Adrenal gland (tissue), 19 donors: ENCODE measurements at regions of chr4 and their contacts with region 1.

Region 1: GRCh38 chr4:17810260-17811077 is at the starts of genes DCAF16 and NCAPG:
- DNase-seq: peak; percentile 99 to 100 (median 99)
- H3K4me3 ChIP-seq: peak within 1 kb of the TSS; percentile 64 to 88 (median 82)
- H3K27ac ChIP-seq: peak within 1 kb of the TSS; percentile 87 to 98 (median 96)
- H3K4me1 ChIP-seq: peaks cover 30 to 50% of the 10 kb centered on the region in 2 donors
- H3K27me3 ChIP-seq: no peaks in the 10 kb centered on the region
- CTCF ChIP-seq: peak in 1 of 6 experiments; percentile 6
- POLR2A ChIP-seq: peak; percentile 93 to 98
- total RNA-seq, gene DCAF16: 14.4 to 43.1 (median 25.2) TPM
- total RNA-seq, gene NCAPG: 0.17 to 16.1 (median 0.77) TPM

Region 2: GRCh38 chr4:17544205-17544604 is 266.3 kb before region 1 on chr4:
- intact Hi-C with region 1: loop called (anchors 10 kb)
- DNase-seq: peak in 5 of 7 donors; percentile 27 to 40 (median 30)
- H3K4me3 ChIP-seq: no peak overlapping the region
- H3K27ac ChIP-seq: no peak overlapping the region
- H3K4me1 ChIP-seq: peaks cover 0 to 8% of the 10 kb centered on the region in 2 donors
- H3K27me3 ChIP-seq: no peaks in the 10 kb centered on the region
- CTCF ChIP-seq: no peak
- POLR2A ChIP-seq: no peak

Region 3: DNA sequence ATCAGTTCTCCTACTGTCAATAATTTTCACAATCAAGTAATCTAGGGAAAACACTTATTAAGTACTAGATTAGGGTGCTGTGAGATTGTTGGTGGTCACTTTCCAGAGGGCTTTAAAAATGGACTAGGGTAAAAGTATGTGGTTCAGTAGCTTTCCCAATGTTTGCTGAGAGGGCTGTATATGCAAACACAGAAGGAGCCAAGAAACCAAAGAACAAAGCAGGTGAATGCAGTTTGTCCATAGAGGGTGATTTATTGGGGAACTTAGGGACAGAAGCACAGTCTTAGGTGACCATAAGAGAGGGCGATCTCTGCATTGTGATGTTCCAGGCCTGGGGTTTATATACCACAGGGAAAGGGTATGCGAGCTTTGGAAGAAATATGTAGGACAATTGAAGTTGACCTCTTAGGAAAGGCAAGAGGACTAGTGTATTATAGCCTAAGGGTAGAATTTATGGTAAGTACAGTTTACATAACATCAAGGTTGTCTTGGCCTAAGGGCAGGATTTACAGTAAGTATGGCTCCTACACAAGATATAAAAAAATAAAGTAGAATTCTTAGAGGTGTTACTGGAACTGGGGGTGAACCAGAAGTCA is 56.9 kb before region 1 on chr4:
- intact Hi-C with region 1: no loop called
- DNase-seq: no peak
- H3K4me3 ChIP-seq: no peak overlapping the region
- H3K27ac ChIP-seq: no peak overlapping the region
- H3K4me1 ChIP-seq: no peaks in the 10 kb centered on the region
- H3K27me3 ChIP-seq: no peaks in the 10 kb centered on the region
- CTCF ChIP-seq: no peak
- POLR2A ChIP-seq: no peak

Region 4: DNA sequence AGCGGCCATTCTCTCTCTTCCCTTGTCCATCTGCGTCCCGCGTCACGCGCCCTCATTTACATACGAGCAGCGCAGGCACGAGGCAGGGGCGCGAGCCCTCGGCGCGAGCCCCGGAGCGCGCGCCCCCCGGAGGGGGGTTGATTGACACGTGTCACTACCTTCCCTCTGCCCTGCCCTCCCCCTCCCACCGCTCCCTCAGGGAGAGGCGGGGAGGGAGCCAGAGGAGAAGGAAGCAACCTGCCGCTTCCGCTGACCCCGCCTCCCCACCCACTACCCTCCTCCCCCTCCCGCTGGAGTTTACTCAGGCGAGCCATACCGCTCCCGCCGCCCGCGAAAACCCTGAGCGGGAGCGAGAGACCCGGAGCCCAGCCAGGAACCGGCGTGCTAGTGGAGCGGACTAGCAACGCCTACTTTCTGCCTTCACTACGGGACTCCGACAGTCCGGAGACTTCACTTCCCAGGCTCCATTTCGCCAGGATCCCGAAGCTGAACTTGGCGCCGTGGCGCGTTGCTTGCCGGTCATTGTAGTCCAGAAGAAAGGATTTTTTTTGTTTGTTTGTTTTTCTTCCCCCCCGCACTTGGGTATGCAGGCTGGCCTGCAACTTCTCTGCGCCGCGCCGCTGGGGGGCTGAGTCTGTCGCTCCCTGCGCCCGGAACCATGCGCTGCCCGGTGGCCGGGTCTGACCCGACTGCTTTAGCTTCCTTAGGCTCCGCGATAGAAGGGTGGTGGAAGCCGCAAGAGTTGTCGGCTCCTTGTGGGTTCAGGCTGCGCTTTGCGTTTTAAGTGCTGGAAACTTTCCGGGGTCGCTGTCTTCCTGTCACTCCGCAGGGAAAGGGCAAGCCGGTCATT is 211.5 kb after region 1 on chr4 and contains the start of gene LCORL:
- intact Hi-C with region 1: loop called in 1 of 2 experiments (anchors 10 kb)
- DNase-seq: peak; percentile 94 to 98 (median 96)
- H3K4me3 ChIP-seq: peak within 1 kb of the TSS; percentile 68 to 99 (median 87)
- H3K27ac ChIP-seq: peak within 1 kb of the TSS; percentile 83 to 97 (median 86)
- H3K4me1 ChIP-seq: peaks cover 4 to 22% of the 10 kb centered on the region in 2 donors
- H3K27me3 ChIP-seq: no peaks in the 10 kb centered on the region
- CTCF ChIP-seq: peak in 3 of 6 experiments; percentile 23 to 36 (median 35)
- POLR2A ChIP-seq: peak in 1 of 2 donors; percentile 9
- total RNA-seq, gene LCORL: 9.3 to 28.8 (median 17.7) TPM